ENCODE measurements at regions of chr2 and their contacts with region 1.

Region 1: GRCh38 chr2:240513549-240514287 is 44.1 kb downstream of the ANKMY1 start:
- DNase-seq: peak; percentile 31
- H3K4me3 ChIP-seq: no peak overlapping the region
- H3K27me3 ChIP-seq: no peaks in the 10 kb centered on the region
- CTCF ChIP-seq: peak; percentile 97

Region 2: DNA sequence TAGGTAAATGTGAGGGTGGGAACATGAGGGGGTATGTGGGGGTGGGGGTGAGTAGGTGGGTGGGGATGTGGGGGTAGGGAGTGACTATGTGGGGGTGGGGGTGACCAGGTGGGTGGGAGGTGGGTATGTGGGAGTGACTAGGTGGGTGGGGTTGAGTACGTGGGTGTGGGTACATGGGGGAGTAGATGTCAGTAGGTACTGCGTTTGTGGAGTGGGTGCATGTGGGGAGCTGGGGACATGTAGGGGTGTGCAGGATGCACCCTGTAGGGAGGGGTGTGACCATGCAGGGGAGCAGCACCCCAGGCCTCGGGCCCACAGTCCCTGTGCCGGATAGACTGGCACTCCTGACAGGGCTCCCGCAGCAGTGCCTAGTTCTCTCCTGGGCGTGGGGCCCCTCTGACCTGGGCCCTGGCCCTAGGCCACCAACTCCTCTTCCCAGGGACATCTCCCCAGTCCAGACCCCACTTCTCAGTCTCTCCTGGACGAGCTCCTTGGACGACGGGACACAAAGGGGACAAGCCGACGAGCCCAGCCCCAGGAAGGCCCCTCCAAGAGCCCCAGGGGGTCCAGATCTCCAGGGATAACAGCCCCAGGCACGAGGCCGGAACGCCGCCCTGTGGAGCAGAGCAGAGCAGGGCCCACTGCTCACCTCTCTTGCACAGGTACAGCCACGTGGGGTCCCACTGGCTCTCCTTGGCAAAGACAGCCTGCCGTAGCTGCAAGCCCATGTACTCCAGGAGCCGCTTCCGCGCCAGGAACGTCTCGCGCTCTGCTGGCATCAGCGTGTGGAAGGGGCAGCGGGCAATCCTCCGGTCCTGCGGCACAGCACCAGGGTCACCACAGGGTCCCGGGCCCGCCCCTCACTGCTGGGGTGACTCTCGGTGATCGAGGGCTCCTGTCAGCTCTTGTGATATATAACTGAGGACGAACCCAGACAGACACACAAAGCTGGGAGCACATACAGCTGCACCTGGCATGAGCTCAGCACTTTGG is 14.1 kb before region 1 on chr2:
- CTCF ChIA-PET with region 1: interaction called, 10 read pairs
- POLR2A ChIA-PET with region 1: no interaction called
- DNase-seq: no peak
- H3K4me3 ChIP-seq: no peak overlapping the region
- H3K27me3 ChIP-seq: no peaks in the 10 kb centered on the region
- CTCF ChIP-seq: no peak

Region 3: DNA sequence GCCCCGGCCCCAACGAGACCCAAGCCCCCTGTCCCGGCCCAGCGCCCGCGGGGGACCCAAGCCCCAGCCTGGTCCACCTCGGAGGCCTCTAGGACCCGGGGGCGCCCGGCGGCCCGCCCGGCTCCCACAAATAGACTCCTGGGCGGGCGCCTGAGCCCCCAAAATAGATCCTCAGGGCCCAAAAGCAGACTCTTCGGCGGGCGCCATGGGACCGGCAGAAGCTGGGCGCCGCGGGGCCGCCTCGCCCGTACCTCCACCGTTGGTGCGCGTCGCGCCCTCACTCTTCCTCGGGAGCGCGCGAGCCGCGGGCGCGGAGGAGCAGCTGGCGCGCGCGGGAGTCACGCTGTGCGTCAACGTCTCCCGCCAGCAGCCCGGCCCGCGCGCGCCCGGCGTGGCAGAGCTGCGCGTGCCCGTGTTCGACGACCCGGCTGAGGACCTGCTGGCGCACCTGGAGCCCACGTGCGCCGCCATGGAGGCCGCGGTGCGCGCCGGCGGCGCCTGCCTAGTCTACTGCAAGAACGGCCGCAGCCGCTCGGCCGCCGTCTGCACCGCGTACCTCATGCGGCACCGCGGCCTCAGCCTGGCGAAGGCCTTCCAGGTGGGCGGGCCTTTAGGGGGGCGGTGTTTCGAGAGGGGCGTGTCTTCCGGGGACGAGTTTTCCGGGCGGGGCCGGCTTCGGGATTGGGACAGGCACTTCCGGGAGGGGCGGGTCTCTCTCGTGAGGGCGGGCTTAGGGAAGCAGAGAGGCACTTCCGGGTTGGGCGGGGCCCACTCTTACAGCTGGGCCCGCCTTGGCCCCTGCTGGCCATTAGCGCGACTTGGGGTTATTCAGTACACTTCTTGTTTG is 47.0 kb after region 1 on chr2:
- CTCF ChIA-PET with region 1: interaction called, 12 read pairs
- POLR2A ChIA-PET with region 1: no interaction called
- DNase-seq: peak; percentile 81
- H3K4me3 ChIP-seq: peak overlapping the region; percentile 76
- H3K27me3 ChIP-seq: no peaks in the 10 kb centered on the region
- CTCF ChIP-seq: peak; percentile 52

Region 4: DNA sequence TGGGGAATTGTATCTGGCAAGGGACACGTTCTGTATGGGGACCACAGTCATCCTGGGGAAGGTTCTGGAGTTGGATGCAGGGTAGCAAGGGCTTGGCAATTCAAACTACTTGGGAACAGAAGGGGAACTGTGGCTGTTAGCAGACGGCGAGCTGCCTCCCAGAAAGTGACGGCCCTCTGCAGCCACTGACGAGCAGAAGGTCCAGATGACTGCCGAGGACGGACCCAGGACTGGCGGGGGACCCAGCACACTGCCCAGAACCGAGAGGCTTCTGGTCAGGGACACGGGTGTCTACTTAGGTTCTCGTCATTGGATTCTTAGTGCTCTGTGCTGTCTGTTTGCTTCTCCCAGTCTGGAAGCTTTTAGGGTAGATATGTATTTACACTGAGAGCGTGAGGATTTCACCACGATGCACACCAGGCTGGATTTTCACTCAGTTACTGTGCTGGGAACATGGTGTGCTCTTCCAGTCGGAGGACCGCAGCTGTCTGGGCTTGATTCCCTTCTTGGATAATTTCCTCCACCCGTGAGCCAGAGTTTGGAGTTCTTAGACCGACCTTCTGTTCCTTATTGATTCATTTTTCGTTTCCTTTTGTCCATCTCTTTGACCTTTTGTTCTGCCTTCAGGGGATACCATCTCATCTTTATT is 124.9 kb after region 1 on chr2:
- CTCF ChIA-PET with region 1: no interaction called
- POLR2A ChIA-PET with region 1: no interaction called
- DNase-seq: no peak
- H3K4me3 ChIP-seq: no peak overlapping the region
- H3K27me3 ChIP-seq: peaks cover 6% of the 10 kb centered on the region
- CTCF ChIP-seq: no peak

Measured in BJ (cell line).